Activated T-helper 1 cell treated with anti-CD3 and anti-CD28 coated beads, Interleukin-12 subunit alpha, Interleukin-12 subunit beta, Interleukin-2, Interleukin-4 antibody, amounts not matched to agents 30 ng/mL and 10 ng/mL and 1 ng/mL, durations not matched to agents 14 hours and 24 hours and 36 hours (primary cell): ENCODE measurements at regions of chr7 and their contacts with region 1.

Region 1: GRCh38 chr7:158829342-158830210 is at the start of gene ESYT2:
- DNase-seq: peak; percentile 99
- H3K4me3 Mint-ChIP-seq: peak within 1 kb of the TSS; percentile 95
- H3K27ac Mint-ChIP-seq: peak within 1 kb of the TSS; percentile 81
- H3K4me1 Mint-ChIP-seq: peaks cover 32% of the 10 kb centered on the region
- H3K27me3 Mint-ChIP-seq: peaks cover 4% of the 10 kb centered on the region
- total RNA-seq, gene ESYT2: 59.1 and 63.1 TPM in 2 replicates

Region 2: GRCh38 chr7:157597562-157597961 is 1232.0 kb before region 1 on chr7:
- intact Hi-C with region 1: no loop called
- DNase-seq: no peak
- H3K4me3 Mint-ChIP-seq: no peak overlapping the region
- H3K27ac Mint-ChIP-seq: no peak overlapping the region
- H3K4me1 Mint-ChIP-seq: peaks cover 4% of the 10 kb centered on the region
- H3K27me3 Mint-ChIP-seq: peaks cover 5% of the 10 kb centered on the region

Region 3: GRCh38 chr7:158704704-158705468 is 124.7 kb before region 1 on chr7 and contains the start of gene NCAPG2:
- intact Hi-C with region 1: loop called (anchors 1 kb)
- DNase-seq: peak; percentile 94
- H3K4me3 Mint-ChIP-seq: peak within 1 kb of the TSS; percentile 87
- H3K27ac Mint-ChIP-seq: peak within 1 kb of the TSS; percentile 87
- H3K4me1 Mint-ChIP-seq: peaks cover 52% of the 10 kb centered on the region
- H3K27me3 Mint-ChIP-seq: peaks cover 2% of the 10 kb centered on the region
- total RNA-seq, gene NCAPG2: 76.5 and 86.9 TPM in 2 replicates

Region 4: GRCh38 chr7:158782761-158783401 is 46.7 kb before region 1 on chr7:
- intact Hi-C with region 1: loop called (anchors 2 kb)
- DNase-seq: no peak
- H3K4me3 Mint-ChIP-seq: no peak overlapping the region
- H3K27ac Mint-ChIP-seq: no peak overlapping the region
- H3K4me1 Mint-ChIP-seq: peaks cover 8% of the 10 kb centered on the region
- H3K27me3 Mint-ChIP-seq: no peaks in the 10 kb centered on the region

Region 5: GRCh38 chr7:158811461-158811860 is 18.1 kb before region 1 on chr7:
- intact Hi-C with region 1: loop called (anchors 1 kb)
- DNase-seq: no peak
- H3K4me3 Mint-ChIP-seq: peak overlapping the region; percentile 64
- H3K27ac Mint-ChIP-seq: peak overlapping the region; percentile 95
- H3K4me1 Mint-ChIP-seq: peaks cover 70% of the 10 kb centered on the region
- H3K27me3 Mint-ChIP-seq: no peaks in the 10 kb centered on the region

Region 6: DNA sequence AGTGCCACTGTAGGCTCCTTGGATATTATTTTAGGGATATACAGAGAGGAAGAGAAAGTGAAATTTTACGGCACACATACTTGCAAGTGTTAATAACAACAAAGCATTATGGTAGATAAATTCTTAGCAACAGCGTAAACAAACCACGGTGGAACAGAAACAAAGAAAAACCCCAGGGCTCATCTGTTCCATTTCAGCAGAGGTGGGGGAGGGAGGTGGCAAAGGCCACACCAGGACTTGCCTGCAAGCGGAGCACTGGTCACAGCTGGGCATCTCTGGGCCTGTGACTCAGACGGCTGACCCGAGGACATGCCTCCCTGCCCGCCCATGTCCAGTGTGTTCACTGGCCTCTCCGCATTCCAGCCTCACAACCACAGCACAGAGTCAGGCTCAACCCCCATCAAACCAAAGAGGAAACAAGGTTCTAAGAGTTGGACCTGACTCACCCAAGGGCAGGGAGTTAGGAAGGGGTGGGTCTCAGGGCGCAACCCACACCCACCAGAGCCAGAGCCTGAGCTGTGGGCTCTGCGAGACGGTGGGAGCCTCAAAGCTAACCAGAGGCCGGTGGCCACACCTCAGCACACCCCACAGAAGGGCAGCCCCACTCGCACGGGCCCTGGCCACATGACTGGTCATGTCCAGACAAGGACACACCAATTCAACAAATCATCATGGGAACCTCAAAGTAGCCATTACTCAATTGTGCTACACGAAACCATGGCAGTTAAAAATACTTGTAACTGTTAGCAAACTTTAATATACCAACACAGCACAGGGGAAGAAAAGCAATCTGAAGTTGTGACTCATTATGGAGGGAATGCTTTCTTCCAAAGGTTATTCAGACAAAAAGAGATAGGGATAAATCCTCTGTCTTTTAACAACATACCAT is 11.0 kb before region 1 on chr7:
- intact Hi-C with region 1: loop called (anchors 1 kb)
- DNase-seq: peak; percentile 78
- H3K4me3 Mint-ChIP-seq: peak overlapping the region; percentile 85
- H3K27ac Mint-ChIP-seq: peak overlapping the region; percentile 100
- H3K4me1 Mint-ChIP-seq: peaks cover 88% of the 10 kb centered on the region
- H3K27me3 Mint-ChIP-seq: no peaks in the 10 kb centered on the region

Region 7: DNA sequence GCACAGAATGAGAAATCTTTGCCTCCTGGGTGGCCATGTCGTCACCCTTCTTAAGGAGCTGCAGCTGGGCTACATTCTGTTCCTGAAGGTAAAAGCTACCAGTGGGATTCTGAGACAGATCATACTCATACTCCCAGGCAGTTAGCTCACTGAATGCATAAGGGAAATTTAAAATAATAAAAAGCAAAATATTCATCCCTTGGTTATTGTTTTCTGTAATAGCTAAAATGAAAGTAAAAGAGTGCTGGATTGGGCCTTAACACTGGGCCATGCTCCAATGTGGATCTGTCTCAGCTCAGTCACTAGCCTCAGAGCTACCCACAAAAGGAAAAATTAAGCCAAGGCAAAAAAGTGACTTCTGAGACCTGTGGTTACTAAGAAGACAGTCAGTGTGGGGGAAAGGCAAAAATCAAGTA is 17.9 kb after region 1 on chr7:
- intact Hi-C with region 1: loop called (anchors 1 kb)
- DNase-seq: no peak
- H3K4me3 Mint-ChIP-seq: peak overlapping the region; percentile 82
- H3K27ac Mint-ChIP-seq: peak overlapping the region; percentile 94
- H3K4me1 Mint-ChIP-seq: peaks cover 38% of the 10 kb centered on the region
- H3K27me3 Mint-ChIP-seq: no peaks in the 10 kb centered on the region

Region 8: GRCh38 chr7:158856883-158857668 is 27.5 kb after region 1 on chr7:
- intact Hi-C with region 1: loop called (anchors 1 kb)
- DNase-seq: no peak
- H3K4me3 Mint-ChIP-seq: peak overlapping the region; percentile 97
- H3K27ac Mint-ChIP-seq: no peak overlapping the region
- H3K4me1 Mint-ChIP-seq: peaks cover 37% of the 10 kb centered on the region
- H3K27me3 Mint-ChIP-seq: peaks cover 2% of the 10 kb centered on the region